Panc1 (cell line): ENCODE measurements at regions of chr10 and their contacts with region 1.

Region 1: GRCh38 chr10:88687853-88688467 is 18.1 kb upstream of the LIPK start:
- DNase-seq: no peak
- ATAC-seq: no peak
- H3K4me3 ChIP-seq: no peak overlapping the region
- H3K27ac ChIP-seq: peak overlapping the region; percentile 24; the same call in 1 of the 2 replicates
- H3K4me1 ChIP-seq: no peaks in the 10 kb centered on the region
- H3K27me3 ChIP-seq: no peaks in the 10 kb centered on the region
- CTCF ChIP-seq: peak; percentile 86; the same call in 1 of the 2 replicates

Region 2: GRCh38 chr10:88707429-88708285 is 19.7 kb after region 1 on chr10:
- CTCF ChIA-PET with region 1: no interaction called
- POLR2A ChIA-PET with region 1: no interaction called
- in situ Hi-C with region 1: no loop called
- intact Hi-C with region 1: no loop called
- DNase-seq: peak; percentile 70
- ATAC-seq: peak; percentile 89
- H3K4me3 ChIP-seq: no peak overlapping the region
- H3K27ac ChIP-seq: peak overlapping the region; percentile 71
- H3K4me1 ChIP-seq: peaks cover 18% of the 10 kb centered on the region
- H3K27me3 ChIP-seq: no peaks in the 10 kb centered on the region
- CTCF ChIP-seq: no peak

Region 3: DNA sequence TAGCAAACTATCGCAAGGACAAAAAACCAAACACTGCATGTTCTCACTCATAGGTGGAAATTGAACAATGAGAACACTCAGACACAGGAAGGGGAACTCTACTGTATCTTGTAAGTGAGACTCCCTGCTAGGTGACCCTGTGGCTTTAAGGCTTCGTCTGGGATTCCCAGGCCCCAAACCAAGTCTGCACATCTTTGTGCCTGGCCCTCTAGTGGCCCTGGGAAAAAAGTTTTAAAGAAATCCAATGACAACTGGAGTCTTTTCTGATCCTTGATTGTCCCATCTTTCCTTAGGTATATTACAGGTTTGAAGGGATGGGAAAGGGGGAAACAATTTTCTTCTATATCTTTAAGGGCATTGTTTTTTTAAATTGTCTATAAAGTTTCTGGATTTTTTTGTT is 104.0 kb after region 1 on chr10:
- CTCF ChIA-PET with region 1: no interaction called
- POLR2A ChIA-PET with region 1: no interaction called
- in situ Hi-C with region 1: no loop called
- intact Hi-C with region 1: loop called (anchors 5 kb)
- DNase-seq: peak; percentile 10
- ATAC-seq: peak; percentile 90
- H3K4me3 ChIP-seq: no peak overlapping the region
- H3K27ac ChIP-seq: no peak overlapping the region
- H3K4me1 ChIP-seq: peaks cover 4% of the 10 kb centered on the region; the same call in 1 of the 2 replicates
- H3K27me3 ChIP-seq: no peaks in the 10 kb centered on the region
- CTCF ChIP-seq: peak; percentile 85